CD8-positive, alpha-beta T cell (primary cell): ENCODE measurements at regions of chr9 and their contacts with region 1.

Region 1: DNA sequence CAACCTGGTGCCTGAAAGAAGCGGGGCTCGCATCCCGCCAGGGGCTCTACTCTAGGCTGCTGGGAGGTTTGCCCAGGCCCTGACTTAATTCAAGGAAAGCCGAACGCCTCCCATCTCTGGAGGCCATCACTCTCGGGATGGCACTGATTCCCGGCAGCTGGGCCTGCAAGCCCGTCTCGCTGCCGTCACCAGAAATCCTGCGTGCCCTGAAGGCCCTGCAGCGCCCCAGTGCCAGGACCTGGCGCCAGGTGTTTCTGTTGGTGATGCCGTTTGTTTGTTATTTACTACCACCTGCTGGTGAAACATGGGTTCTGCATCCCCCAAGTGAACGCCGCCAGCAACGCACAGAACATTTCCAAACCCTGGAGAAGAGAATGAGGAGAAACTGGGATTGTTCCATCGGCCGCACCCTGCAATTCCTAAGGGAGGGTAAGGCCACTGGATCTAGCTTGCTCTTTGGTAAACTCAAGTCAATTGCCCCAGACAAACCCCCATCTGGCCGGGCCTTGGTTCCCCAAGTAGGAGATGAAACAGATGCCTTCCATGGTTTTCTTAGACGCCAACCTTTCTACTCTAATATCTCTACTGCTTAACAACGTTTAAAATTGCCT is 77.9 kb downstream of the AK8 start:
- DNase-seq: peak; percentile 35 to 82 (median 65)
- ATAC-seq: peak; percentile 97
- H3K4me3 ChIP-seq: no peak overlapping the region
- H3K4me3 Mint-ChIP-seq: no peak overlapping the region
- H3K27ac ChIP-seq: no peak overlapping the region
- H3K27ac Mint-ChIP-seq: no peak overlapping the region
- H3K4me1 ChIP-seq: no peaks in the 10 kb centered on the region
- H3K4me1 Mint-ChIP-seq: peaks cover 9% of the 10 kb centered on the region
- H3K27me3 ChIP-seq: peaks cover 4 to 8% of the 10 kb centered on the region in 2 experiments
- H3K27me3 Mint-ChIP-seq: peaks cover 26% of the 10 kb centered on the region
- CTCF ChIP-seq: peak; percentile 76

Region 2: GRCh38 chr9:132507746-132508469 is 292.2 kb before region 1 on chr9:
- CTCF ChIA-PET with region 1: interaction called, 8 read pairs
- POLR2A ChIA-PET with region 1: no interaction called
- intact Hi-C with region 1: loop called in 1 of 2 experiments (anchors 1 kb)
- DNase-seq: peak; percentile 33 to 79 (median 70)
- ATAC-seq: peak; percentile 58
- H3K4me3 ChIP-seq: no peak overlapping the region
- H3K4me3 Mint-ChIP-seq: no peak overlapping the region
- H3K27ac ChIP-seq: no peak overlapping the region
- H3K27ac Mint-ChIP-seq: no peak overlapping the region
- H3K4me1 ChIP-seq: peaks cover 11% of the 10 kb centered on the region
- H3K4me1 Mint-ChIP-seq: peaks cover 10% of the 10 kb centered on the region
- H3K27me3 ChIP-seq: peaks cover 2% of the 10 kb centered on the region in 2 experiments
- H3K27me3 Mint-ChIP-seq: peaks cover 13% of the 10 kb centered on the region
- CTCF ChIP-seq: peak; percentile 74

Region 3: GRCh38 chr9:132644251-132644650 is 155.9 kb before region 1 on chr9:
- CTCF ChIA-PET with region 1: interaction called, 3 read pairs
- POLR2A ChIA-PET with region 1: no interaction called
- intact Hi-C with region 1: loop called in 1 of 2 experiments (anchors 10 kb)
- DNase-seq: no peak
- ATAC-seq: peak; percentile 54
- H3K4me3 ChIP-seq: no peak overlapping the region
- H3K4me3 Mint-ChIP-seq: no peak overlapping the region
- H3K27ac ChIP-seq: no peak overlapping the region
- H3K27ac Mint-ChIP-seq: no peak overlapping the region
- H3K4me1 ChIP-seq: no peaks in the 10 kb centered on the region
- H3K4me1 Mint-ChIP-seq: no peaks in the 10 kb centered on the region
- H3K27me3 ChIP-seq: no peaks in the 10 kb centered on the region
- H3K27me3 Mint-ChIP-seq: no peaks in the 10 kb centered on the region
- CTCF ChIP-seq: no peak

Region 4: GRCh38 chr9:132694157-132694556 is 106.0 kb before region 1 on chr9:
- CTCF ChIA-PET with region 1: interaction called, 5 read pairs
- POLR2A ChIA-PET with region 1: no interaction called
- intact Hi-C with region 1: loop called (anchors 1 kb)
- DNase-seq: peak in 4 of 9 experiments; percentile 3 to 63 (median 24)
- ATAC-seq: peak; percentile 89
- H3K4me3 ChIP-seq: no peak overlapping the region
- H3K4me3 Mint-ChIP-seq: no peak overlapping the region
- H3K27ac ChIP-seq: no peak overlapping the region
- H3K27ac Mint-ChIP-seq: no peak overlapping the region
- H3K4me1 ChIP-seq: no peaks in the 10 kb centered on the region
- H3K4me1 Mint-ChIP-seq: no peaks in the 10 kb centered on the region
- H3K27me3 ChIP-seq: no peaks in the 10 kb centered on the region
- H3K27me3 Mint-ChIP-seq: peaks cover 2% of the 10 kb centered on the region
- CTCF ChIP-seq: no peak

Region 5: DNA sequence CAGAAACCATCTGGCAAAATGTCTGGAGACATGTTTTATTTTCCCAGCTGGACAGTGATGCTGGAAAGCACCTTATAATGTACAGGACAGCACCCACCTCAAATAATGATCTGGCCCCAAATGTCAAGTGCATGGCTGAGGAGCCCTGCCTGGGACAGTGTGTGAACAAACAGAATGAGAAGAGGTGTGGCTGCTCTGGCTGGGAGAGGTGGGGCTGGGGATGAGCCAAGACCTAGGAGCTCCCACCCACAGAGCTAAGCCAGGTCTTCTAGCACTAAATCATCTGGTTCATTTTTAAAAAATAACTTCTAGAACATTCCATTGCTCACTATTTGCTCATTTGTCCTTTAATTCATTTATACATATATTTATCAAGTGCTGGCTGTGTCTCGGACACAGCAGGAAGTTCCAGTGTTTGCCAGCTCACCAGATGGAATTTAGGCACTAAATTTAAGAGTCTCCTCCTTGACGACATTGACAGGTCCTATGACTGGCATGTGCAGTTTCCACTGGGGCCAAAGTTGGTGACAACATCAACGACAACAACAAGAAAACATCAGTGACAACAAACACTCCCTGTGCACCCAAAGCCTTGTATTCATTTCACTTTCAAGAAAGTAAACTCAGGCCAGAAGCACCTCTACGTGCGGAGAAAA is 70.8 kb before region 1 on chr9:
- CTCF ChIA-PET with region 1: no interaction called
- POLR2A ChIA-PET with region 1: no interaction called
- intact Hi-C with region 1: no loop called
- DNase-seq: no peak
- ATAC-seq: no peak
- H3K4me3 ChIP-seq: no peak overlapping the region
- H3K4me3 Mint-ChIP-seq: no peak overlapping the region
- H3K27ac ChIP-seq: no peak overlapping the region
- H3K27ac Mint-ChIP-seq: no peak overlapping the region
- H3K4me1 ChIP-seq: no peaks in the 10 kb centered on the region
- H3K4me1 Mint-ChIP-seq: no peaks in the 10 kb centered on the region
- H3K27me3 ChIP-seq: no peaks in the 10 kb centered on the region
- H3K27me3 Mint-ChIP-seq: peaks cover 12% of the 10 kb centered on the region
- CTCF ChIP-seq: no peak

Region 6: GRCh38 chr9:132768932-132769905 is 30.9 kb before region 1 on chr9:
- CTCF ChIA-PET with region 1: interaction called, 3 read pairs
- POLR2A ChIA-PET with region 1: no interaction called
- intact Hi-C with region 1: loop called (anchors 1 kb)
- DNase-seq: peak; percentile 12 to 84 (median 68)
- ATAC-seq: peak; percentile 77
- H3K4me3 ChIP-seq: peak overlapping the region; percentile 78 to 96
- H3K4me3 Mint-ChIP-seq: peak overlapping the region; percentile 97
- H3K27ac ChIP-seq: peak overlapping the region; percentile 84 to 86
- H3K27ac Mint-ChIP-seq: peak overlapping the region; percentile 95
- H3K4me1 ChIP-seq: peaks cover 6% of the 10 kb centered on the region
- H3K4me1 Mint-ChIP-seq: peaks cover 28% of the 10 kb centered on the region
- H3K27me3 ChIP-seq: no peaks in the 10 kb centered on the region
- H3K27me3 Mint-ChIP-seq: no peaks in the 10 kb centered on the region
- CTCF ChIP-seq: peak; percentile 42

Region 7: GRCh38 chr9:132789719-132790118 is 10.4 kb before region 1 on chr9:
- CTCF ChIA-PET with region 1: interaction called, 10 read pairs
- POLR2A ChIA-PET with region 1: no interaction called
- intact Hi-C with region 1: no loop called
- DNase-seq: peak in 1 of 9 experiments; percentile 7
- ATAC-seq: no peak
- H3K4me3 ChIP-seq: no peak overlapping the region
- H3K4me3 Mint-ChIP-seq: no peak overlapping the region
- H3K27ac ChIP-seq: no peak overlapping the region
- H3K27ac Mint-ChIP-seq: no peak overlapping the region
- H3K4me1 ChIP-seq: no peaks in the 10 kb centered on the region
- H3K4me1 Mint-ChIP-seq: no peaks in the 10 kb centered on the region
- H3K27me3 ChIP-seq: no peaks in the 10 kb centered on the region
- H3K27me3 Mint-ChIP-seq: peaks cover 16% of the 10 kb centered on the region
- CTCF ChIP-seq: no peak

Region 8: GRCh38 chr9:132857616-132858342 is 57.6 kb after region 1 on chr9:
- CTCF ChIA-PET with region 1: no interaction called
- POLR2A ChIA-PET with region 1: no interaction called
- intact Hi-C with region 1: no loop called
- DNase-seq: no peak
- ATAC-seq: no peak
- H3K4me3 ChIP-seq: no peak overlapping the region
- H3K4me3 Mint-ChIP-seq: no peak overlapping the region
- H3K27ac ChIP-seq: no peak overlapping the region
- H3K27ac Mint-ChIP-seq: no peak overlapping the region
- H3K4me1 ChIP-seq: no peaks in the 10 kb centered on the region
- H3K4me1 Mint-ChIP-seq: peaks cover 9% of the 10 kb centered on the region
- H3K27me3 ChIP-seq: no peaks in the 10 kb centered on the region
- H3K27me3 Mint-ChIP-seq: peaks cover 2% of the 10 kb centered on the region
- CTCF ChIP-seq: no peak

Region 9: DNA sequence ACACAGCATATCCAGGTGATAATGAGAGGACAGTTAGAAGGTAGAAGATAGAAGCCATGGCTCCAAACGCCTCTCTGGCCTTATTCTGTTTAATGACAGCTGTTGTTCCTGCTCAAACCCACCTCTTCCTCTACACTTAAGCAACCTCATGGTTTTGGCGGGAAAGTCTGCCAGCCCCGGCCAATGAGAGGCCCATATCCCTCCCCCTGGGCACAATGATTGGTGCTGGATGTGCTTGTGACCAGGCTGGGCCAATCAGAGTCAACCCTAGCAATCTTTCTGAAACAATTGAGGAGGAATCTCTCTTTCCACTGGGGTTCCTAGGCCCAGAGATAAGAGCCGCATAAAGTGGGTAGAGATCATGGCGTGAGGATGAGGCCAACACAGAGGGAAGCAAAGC is 173.6 kb after region 1 on chr9:
- CTCF ChIA-PET with region 1: interaction called, 3 read pairs
- POLR2A ChIA-PET with region 1: no interaction called
- intact Hi-C with region 1: loop called in 1 of 2 experiments (anchors 1 kb)
- DNase-seq: peak in 1 of 9 experiments; percentile 28
- ATAC-seq: peak; percentile 41
- H3K4me3 ChIP-seq: no peak overlapping the region
- H3K4me3 Mint-ChIP-seq: no peak overlapping the region
- H3K27ac ChIP-seq: no peak overlapping the region
- H3K27ac Mint-ChIP-seq: no peak overlapping the region
- H3K4me1 ChIP-seq: peaks cover 3% of the 10 kb centered on the region
- H3K4me1 Mint-ChIP-seq: peaks cover 4% of the 10 kb centered on the region
- H3K27me3 ChIP-seq: peaks cover 6 to 8% of the 10 kb centered on the region in 2 experiments
- H3K27me3 Mint-ChIP-seq: peaks cover 19% of the 10 kb centered on the region
- CTCF ChIP-seq: no peak